ENCODE measurements at regions of chr12 and their contacts with region 1.

Region 1: DNA sequence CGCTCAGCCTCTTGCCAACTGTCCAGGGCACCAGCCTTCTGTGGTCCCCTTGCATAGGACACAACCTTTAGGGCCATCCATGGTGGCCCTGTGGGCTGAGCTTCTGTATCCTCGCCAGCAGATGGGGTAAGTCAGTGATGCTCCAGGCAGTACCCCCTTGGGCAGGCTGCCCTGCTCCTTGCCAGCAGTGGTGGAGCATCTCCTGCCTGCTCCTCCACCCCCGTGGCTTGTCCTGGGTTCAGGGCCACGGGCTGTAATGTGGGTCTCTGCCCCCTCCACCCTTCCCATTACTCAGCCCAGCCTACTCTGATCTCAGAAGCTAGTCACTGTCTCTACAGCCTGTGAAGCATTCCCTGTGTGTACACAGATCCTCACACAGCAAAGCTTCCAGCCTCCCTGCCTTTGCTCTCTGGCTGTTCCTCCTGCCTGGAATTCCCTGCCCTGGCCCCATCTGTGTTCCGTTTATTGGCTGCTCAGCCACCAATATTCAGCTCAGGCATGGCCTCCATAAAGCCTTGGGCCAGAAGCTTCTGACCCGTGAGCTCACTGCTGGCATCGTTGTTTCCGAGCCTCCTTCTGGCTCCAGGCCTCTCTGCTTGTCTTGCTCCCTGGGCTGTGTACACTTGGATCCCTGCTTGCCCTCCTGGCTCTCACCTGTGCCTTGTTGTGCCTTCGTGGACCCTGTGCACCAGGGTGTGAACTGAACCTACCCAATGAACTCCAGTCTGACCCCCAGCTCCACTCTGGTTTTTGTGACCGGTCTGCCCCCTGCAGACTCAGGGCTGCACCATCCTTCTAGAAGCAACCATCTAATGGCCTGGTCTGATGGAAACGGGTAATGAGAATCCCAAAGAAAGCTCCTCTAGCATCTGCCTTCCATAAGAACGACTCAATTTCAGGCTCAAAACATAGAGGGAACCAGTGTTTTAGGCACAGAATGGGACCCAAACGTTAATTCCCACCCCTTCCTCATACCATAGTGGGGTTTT is 177.0 kb upstream of the PRMT8 start:
- DNase-seq: peak in 1 of 5 donors; percentile 64
- ATAC-seq: peak in 3 of 4 donors; percentile 15 to 35 (median 17)
- H3K4me3 ChIP-seq: no peak overlapping the region
- H3K27ac ChIP-seq: peak overlapping the region in 4 of 12 donors; percentile 2 to 70 (median 50)
- H3K4me1 ChIP-seq: peaks cover 3 to 37% (median 24%) of the 10 kb centered on the region in 12 donors
- H3K27me3 ChIP-seq: no peaks in the 10 kb centered on the region
- CTCF ChIP-seq: peak in 8 of 12 donors; percentile 15 to 52 (median 36)
- POLR2A ChIP-seq: no peak

Region 2: DNA sequence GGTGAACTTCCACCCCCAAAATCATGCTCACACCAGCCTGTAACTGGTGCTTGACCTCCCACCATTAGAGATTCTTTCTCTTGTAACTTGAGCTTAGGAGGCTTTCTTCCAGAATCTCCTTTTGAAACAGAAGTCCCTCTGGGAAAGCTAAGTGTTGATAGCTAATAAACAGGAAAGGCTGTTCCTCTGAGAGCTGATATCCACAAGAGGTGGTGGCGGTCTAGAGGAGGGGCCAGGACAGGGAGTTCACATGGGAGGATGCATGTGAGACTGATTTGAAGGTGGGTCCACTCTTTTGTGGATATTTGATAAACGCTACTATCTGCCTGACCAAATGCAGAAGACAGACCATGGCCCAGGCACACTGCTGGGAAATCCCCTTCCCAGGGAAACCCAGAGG is 166.8 kb after region 1 on chr12:
- intact Hi-C with region 1: no loop called
- DNase-seq: no peak
- ATAC-seq: no peak
- H3K4me3 ChIP-seq: no peak overlapping the region
- H3K27ac ChIP-seq: no peak overlapping the region
- H3K4me1 ChIP-seq: no peaks in the 10 kb centered on the region
- H3K27me3 ChIP-seq: peaks cover 0 to 13% (median 0%) of the 10 kb centered on the region in 9 donors
- CTCF ChIP-seq: no peak
- POLR2A ChIP-seq: no peak

Region 3: DNA sequence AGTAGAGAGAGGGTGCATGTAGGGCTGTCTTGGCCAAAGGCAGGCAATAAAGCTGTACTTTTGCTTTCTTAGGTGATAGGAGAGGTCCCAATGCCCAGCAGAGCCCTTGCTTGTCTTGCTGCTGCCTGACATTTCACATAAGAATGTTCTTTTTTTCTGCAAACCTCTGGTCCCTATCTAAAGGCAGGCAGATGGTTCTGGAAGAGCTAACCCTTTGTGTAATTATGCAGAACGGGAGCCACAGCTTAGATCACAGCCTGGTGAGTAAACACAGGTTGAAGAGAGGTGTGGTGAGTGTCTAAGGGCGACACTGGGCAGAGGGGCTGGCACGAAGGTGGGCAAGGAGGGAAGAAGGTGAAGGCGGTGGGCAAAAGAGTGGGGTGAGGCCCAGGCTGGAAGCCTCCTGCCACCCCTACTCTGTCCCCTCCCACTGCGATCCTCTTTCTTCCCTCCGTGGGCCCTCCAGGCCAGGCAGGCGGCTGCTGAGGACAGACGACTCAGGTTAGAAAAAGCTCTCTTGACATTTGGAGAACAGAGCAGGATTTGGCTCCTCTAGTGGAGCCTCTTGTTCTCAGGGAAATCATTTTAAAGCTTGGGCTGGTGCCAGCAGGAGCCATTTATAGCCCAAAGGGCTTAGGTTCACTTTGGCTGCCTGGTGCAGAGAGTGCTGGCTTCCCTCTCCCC is 219.9 kb after region 1 on chr12:
- intact Hi-C with region 1: loop called in 1 of 10 experiments (anchors 5 kb)
- DNase-seq: peak in 4 of 5 donors; percentile 65 to 86 (median 73)
- ATAC-seq: peak; percentile 78 to 87 (median 84)
- H3K4me3 ChIP-seq: no peak overlapping the region
- H3K27ac ChIP-seq: peak overlapping the region in 11 of 12 donors; percentile 24 to 81 (median 69)
- H3K4me1 ChIP-seq: peaks cover 0 to 44% (median 5%) of the 10 kb centered on the region in 12 donors
- H3K27me3 ChIP-seq: peaks cover 0 to 4% (median 0%) of the 10 kb centered on the region in 9 donors
- CTCF ChIP-seq: peak in 7 of 12 donors; percentile 8 to 49 (median 32)
- POLR2A ChIP-seq: no peak

Region 4: GRCh38 chr12:3658327-3659163 is 344.6 kb after region 1 on chr12:
- intact Hi-C with region 1: loop called in 1 of 10 experiments (anchors 10 kb)
- DNase-seq: peak in 3 of 5 donors; percentile 28 to 44 (median 41)
- ATAC-seq: peak; percentile 47 to 77 (median 56)
- H3K4me3 ChIP-seq: no peak overlapping the region
- H3K27ac ChIP-seq: no peak overlapping the region
- H3K4me1 ChIP-seq: peaks cover 0 to 19% (median 5%) of the 10 kb centered on the region in 12 donors
- H3K27me3 ChIP-seq: no peaks in the 10 kb centered on the region
- CTCF ChIP-seq: peak; percentile 26 to 62 (median 46)
- POLR2A ChIP-seq: no peak

Region 5: GRCh38 chr12:3680896-3681594 is 367.1 kb after region 1 on chr12:
- intact Hi-C with region 1: loop called in 5 of 10 experiments (anchors 5 to 10 kb)
- DNase-seq: peak; percentile 49 to 83 (median 68)
- ATAC-seq: peak in 3 of 4 donors; percentile 28 to 37 (median 35)
- H3K4me3 ChIP-seq: no peak overlapping the region
- H3K27ac ChIP-seq: peak overlapping the region in 3 of 12 donors; percentile 7 to 65 (median 28)
- H3K4me1 ChIP-seq: peaks cover 0 to 34% (median 7%) of the 10 kb centered on the region in 12 donors
- H3K27me3 ChIP-seq: no peaks in the 10 kb centered on the region
- CTCF ChIP-seq: peak in 9 of 12 donors; percentile 19 to 55 (median 30)
- POLR2A ChIP-seq: no peak